Activated naive CD4-positive, alpha-beta T cell treated with anti-CD3 and anti-CD28 coated beads for 36 hours (primary cell): ENCODE measurements at regions of chr6 and their contacts with region 1.

Region 1: DNA sequence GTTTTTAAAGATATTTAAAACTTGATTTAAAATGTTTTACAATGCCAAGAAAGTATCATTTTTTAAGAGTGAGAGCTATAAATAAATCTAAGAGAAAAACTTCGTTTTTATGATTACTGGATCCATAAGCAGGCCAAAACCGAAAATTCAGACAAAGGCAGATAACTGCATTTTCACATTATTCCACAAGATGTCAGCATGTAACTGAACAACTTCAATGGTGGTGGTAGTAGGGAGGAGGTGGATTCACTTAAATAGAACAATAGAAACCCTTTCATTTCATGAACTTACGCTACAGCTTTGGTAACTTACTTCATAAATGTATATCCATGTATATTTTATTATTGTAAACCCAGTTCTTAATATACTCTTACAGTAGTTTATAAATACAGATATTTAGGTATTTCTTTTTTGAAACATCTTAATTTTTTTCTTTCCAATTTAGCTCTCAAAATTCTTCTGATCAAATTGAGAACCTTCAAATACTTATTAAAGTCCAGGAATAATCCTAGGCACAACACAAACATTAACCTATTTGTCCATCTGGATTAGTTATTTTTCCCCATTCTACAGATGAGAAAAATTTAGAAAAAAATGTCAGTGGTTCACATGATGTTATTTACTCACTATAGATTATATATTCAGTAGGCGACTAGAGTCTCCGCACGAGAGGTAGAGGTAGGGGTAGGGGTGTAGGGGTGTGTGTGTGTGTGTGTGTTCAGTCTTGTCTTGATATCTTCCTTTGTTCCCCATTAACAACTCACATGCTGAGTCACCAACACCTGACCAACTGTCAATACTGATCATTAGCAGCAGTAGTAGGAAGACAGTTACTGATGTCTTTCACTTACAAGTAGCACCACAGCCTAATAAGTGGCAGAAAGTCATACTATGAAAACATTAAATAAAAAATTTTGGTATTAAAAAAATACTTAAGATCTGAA is 111.5 kb downstream of the ARHGAP18 start:
- DNase-seq: no peak
- H3K4me3 Mint-ChIP-seq: no peak overlapping the region
- H3K27ac Mint-ChIP-seq: no peak overlapping the region
- H3K4me1 Mint-ChIP-seq: no peaks in the 10 kb centered on the region
- H3K27me3 Mint-ChIP-seq: no peaks in the 10 kb centered on the region

Region 2: GRCh38 chr6:129558248-129558647 is 40.3 kb before region 1 on chr6:
- CTCF ChIA-PET with region 1: no interaction called
- intact Hi-C with region 1: no loop called
- DNase-seq: no peak
- H3K4me3 Mint-ChIP-seq: no peak overlapping the region
- H3K27ac Mint-ChIP-seq: no peak overlapping the region
- H3K4me1 Mint-ChIP-seq: no peaks in the 10 kb centered on the region
- H3K27me3 Mint-ChIP-seq: peaks cover 5% of the 10 kb centered on the region

Region 3: GRCh38 chr6:129609635-129610034 is 11.1 kb after region 1 on chr6:
- CTCF ChIA-PET with region 1: interaction called, 11 read pairs
- intact Hi-C with region 1: no loop called
- DNase-seq: no peak
- H3K4me3 Mint-ChIP-seq: no peak overlapping the region
- H3K27ac Mint-ChIP-seq: no peak overlapping the region
- H3K4me1 Mint-ChIP-seq: peaks cover 2% of the 10 kb centered on the region
- H3K27me3 Mint-ChIP-seq: no peaks in the 10 kb centered on the region

Region 4: GRCh38 chr6:129730477-129731165 is 132.1 kb after region 1 on chr6:
- CTCF ChIA-PET with region 1: interaction called, 160 read pairs
- intact Hi-C with region 1: loop called (anchors 1 kb)
- DNase-seq: peak; percentile 47
- H3K4me3 Mint-ChIP-seq: no peak overlapping the region
- H3K27ac Mint-ChIP-seq: no peak overlapping the region
- H3K4me1 Mint-ChIP-seq: peaks cover 10% of the 10 kb centered on the region
- H3K27me3 Mint-ChIP-seq: no peaks in the 10 kb centered on the region

Region 5: GRCh38 chr6:129774697-129775447 is 176.4 kb after region 1 on chr6:
- CTCF ChIA-PET with region 1: interaction called, 15 read pairs
- intact Hi-C with region 1: loop called (anchors 1 kb)
- DNase-seq: peak; percentile 68
- H3K4me3 Mint-ChIP-seq: no peak overlapping the region
- H3K27ac Mint-ChIP-seq: no peak overlapping the region
- H3K4me1 Mint-ChIP-seq: peaks cover 3% of the 10 kb centered on the region
- H3K27me3 Mint-ChIP-seq: no peaks in the 10 kb centered on the region

Region 6: DNA sequence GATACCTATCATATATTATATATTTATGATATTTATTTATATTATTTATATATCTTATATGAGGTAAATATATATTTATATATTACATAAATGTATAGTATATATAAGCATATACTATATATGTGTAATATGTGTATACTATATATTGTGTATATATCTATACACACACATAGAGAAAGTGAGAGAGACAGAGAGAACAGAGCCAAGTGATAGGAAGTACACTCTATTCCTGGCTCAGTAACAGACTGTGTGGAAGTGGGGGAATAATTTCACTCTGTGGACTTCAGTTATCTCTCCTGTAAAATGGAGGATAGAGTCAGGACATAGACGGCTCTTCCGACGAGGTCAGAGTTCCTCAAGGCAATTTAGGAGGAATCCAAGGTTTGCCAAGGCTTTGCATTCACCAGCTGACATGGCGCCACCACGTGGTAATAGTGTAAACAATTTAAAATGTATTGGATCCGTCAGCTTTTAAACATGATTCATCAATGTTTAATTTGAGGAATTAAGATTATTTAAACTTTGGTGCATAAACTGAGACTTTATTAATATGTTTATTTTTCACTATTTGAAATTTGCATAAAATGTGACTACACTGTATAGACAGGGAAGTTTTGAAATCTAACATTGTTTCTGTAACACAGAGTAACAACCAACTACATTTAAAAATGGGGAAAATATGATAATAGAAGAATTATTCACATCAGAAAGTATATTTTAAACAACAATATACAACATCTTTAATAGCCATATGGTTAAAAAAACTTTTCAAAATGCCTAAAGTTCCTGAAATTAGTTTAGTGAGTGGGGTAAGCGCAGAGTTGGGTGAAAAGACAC is 338.0 kb after region 1 on chr6:
- CTCF ChIA-PET with region 1: interaction called, 6 read pairs
- intact Hi-C with region 1: loop called (anchors 1 kb)
- DNase-seq: peak; percentile 63
- H3K4me3 Mint-ChIP-seq: no peak overlapping the region
- H3K27ac Mint-ChIP-seq: no peak overlapping the region
- H3K4me1 Mint-ChIP-seq: peaks cover 2% of the 10 kb centered on the region
- H3K27me3 Mint-ChIP-seq: peaks cover 3% of the 10 kb centered on the region